Activated CD4-positive, alpha-beta memory T cell treated with anti-CD3 and anti-CD28 coated beads, Interleukin-2, amount 10 ng/mL, durations not matched to agents 7 days and 5 days (primary cell): ENCODE measurements at regions of chr6 and their contacts with region 1.

Region 1: DNA sequence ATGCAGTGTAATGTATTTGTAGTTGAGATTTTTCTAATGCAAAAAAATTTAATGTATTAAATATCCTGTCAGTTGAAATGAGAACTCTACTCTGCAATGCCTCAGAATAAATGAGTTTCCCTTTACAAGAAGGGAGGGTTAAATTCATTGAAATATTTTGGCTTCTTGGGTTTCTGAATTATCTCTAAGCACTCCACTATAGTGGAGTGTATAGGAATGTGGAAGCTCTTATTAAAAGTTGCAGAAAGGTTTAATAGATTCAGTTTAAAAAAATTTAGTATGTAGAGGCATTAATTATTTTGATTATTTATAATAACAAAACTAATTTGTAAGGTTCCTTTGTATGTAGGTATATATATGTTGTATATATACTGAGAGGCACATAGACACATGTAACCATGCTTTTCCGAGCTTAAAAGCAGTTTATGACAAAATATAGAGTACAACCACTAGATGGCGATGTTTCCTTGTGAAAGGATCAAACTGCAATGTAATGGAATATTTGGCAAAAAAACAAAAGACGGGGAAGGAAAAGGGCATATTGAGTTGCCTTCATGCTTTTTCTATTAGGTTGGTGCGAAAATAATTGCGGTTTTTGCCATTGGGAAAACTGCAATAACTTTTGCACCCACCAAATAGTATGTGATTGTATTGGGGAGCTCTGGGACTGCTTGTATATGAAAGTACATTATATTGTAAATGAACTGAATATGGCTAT is 144.2 kb downstream of the MYO6 start:
- DNase-seq: no peak
- H3K4me3 Mint-ChIP-seq: no peak overlapping the region
- H3K27ac Mint-ChIP-seq: no peak overlapping the region
- H3K4me1 Mint-ChIP-seq: no peaks in the 10 kb centered on the region
- H3K27me3 Mint-ChIP-seq: no peaks in the 10 kb centered on the region

Region 2: GRCh38 chr6:75830959-75831885 is 62.0 kb before region 1 on chr6:
- CTCF ChIA-PET with region 1: no interaction called
- POLR2A ChIA-PET with region 1: no interaction called
- DNase-seq: peak; percentile 24
- H3K4me3 Mint-ChIP-seq: no peak overlapping the region
- H3K27ac Mint-ChIP-seq: peak overlapping the region; percentile 30
- H3K4me1 Mint-ChIP-seq: peaks cover 11% of the 10 kb centered on the region
- H3K27me3 Mint-ChIP-seq: no peaks in the 10 kb centered on the region

Region 3: DNA sequence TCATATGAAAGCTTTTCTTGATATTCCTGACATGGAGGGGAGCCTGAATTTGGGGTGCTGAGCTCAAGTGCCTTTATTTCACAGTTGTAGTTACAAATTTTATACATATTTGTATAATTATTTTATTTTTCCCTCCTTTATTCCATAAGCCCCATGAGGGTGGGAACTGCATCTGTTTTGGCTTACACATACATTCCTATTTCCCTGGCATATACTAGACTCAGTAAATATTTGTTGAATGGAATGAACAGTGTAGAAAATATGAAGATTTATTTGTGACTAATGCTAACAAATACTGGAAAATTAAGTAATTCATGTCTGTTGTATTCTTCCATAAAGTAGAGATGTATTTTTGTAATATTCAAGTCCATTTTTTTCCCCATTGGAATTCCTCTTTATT is 17.1 kb before region 1 on chr6:
- CTCF ChIA-PET with region 1: interaction called, 16 read pairs
- POLR2A ChIA-PET with region 1: no interaction called
- DNase-seq: no peak
- H3K4me3 Mint-ChIP-seq: no peak overlapping the region
- H3K27ac Mint-ChIP-seq: no peak overlapping the region
- H3K4me1 Mint-ChIP-seq: no peaks in the 10 kb centered on the region
- H3K27me3 Mint-ChIP-seq: no peaks in the 10 kb centered on the region

Region 4: GRCh38 chr6:75882734-75883133 is 10.5 kb before region 1 on chr6:
- CTCF ChIA-PET with region 1: interaction called, 21 read pairs
- POLR2A ChIA-PET with region 1: interaction called, 3 read pairs
- DNase-seq: no peak
- H3K4me3 Mint-ChIP-seq: no peak overlapping the region
- H3K27ac Mint-ChIP-seq: no peak overlapping the region
- H3K4me1 Mint-ChIP-seq: no peaks in the 10 kb centered on the region
- H3K27me3 Mint-ChIP-seq: no peaks in the 10 kb centered on the region

Region 5: DNA sequence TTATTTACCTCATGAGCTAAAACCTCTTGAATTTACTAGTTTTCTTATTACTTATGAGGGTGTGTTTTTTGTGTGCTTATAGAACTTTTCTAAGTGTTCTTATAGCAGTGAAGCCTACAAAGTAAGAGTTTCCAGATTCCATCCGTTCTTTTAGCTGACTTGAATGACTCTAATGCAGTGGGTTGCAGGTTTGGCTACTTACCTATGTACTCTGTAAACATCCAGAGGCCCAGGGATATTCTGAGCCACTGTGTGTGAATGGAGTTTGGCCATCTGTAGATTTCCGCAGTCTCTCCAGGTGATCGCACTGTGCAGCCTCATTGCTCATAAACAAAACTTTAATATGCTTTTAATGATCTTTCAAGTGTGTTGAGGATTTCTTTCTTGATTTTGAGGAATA is 13.7 kb after region 1 on chr6:
- CTCF ChIA-PET with region 1: interaction called, 14 read pairs
- POLR2A ChIA-PET with region 1: no interaction called
- DNase-seq: no peak
- H3K4me3 Mint-ChIP-seq: no peak overlapping the region
- H3K27ac Mint-ChIP-seq: no peak overlapping the region
- H3K4me1 Mint-ChIP-seq: no peaks in the 10 kb centered on the region
- H3K27me3 Mint-ChIP-seq: no peaks in the 10 kb centered on the region

Region 6: GRCh38 chr6:75934643-75935472 is 41.6 kb after region 1 on chr6:
- CTCF ChIA-PET with region 1: interaction called, 23 read pairs
- POLR2A ChIA-PET with region 1: no interaction called
- DNase-seq: peak; percentile 27
- H3K4me3 Mint-ChIP-seq: no peak overlapping the region
- H3K27ac Mint-ChIP-seq: no peak overlapping the region
- H3K4me1 Mint-ChIP-seq: peaks cover 4% of the 10 kb centered on the region
- H3K27me3 Mint-ChIP-seq: peaks cover 13% of the 10 kb centered on the region